Activated B cell treated with CpG ODN at 0.5 μM for 24 hours (primary cell): ENCODE measurements at regions of chr5 and their contacts with region 1.

Region 1: DNA sequence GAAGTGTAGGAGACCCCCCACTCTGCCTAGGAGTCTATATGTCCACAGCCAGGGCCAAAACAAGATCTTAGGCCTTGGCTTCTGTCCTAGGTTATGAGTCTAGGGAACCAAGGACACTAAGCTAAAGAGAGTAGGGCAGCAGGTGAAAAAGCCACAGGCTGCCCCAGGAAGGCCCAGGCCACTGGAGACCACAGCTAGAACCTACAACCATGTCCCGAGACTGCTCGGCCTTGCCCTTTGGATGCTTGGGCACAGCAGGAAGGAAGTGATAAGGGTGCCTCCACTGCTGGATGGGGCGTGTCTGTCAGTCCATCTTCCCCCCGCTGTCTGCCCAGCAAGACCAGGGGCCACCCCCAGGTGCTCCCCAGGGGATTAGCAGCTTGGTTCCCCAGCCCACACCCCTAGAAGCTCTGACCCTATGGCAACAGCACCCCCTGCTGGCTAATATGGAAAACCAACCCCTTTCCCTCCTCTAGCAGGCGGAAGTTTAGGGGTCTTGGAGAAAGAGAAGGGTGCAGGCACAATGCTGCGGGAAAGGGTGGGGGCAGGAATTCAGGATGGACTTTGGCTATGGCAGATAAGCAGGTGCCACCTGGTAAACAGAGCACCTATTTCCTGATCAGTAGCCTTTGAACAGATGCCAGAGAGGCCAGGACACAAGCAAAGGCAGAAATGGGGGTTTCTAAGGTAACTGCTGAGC is 10.5 kb upstream of the IRF1 start:
- DNase-seq: peak; percentile 75
- ATAC-seq: peak; percentile 55
- H3K4me3 Mint-ChIP-seq: no peak overlapping the region
- H3K27ac Mint-ChIP-seq: peak overlapping the region; percentile 88
- H3K4me1 Mint-ChIP-seq: peaks cover 30% of the 10 kb centered on the region
- H3K27me3 Mint-ChIP-seq: no peaks in the 10 kb centered on the region
- CTCF ChIP-seq: peak; percentile 84

Region 2: GRCh38 chr5:131671994-131672655 is 829.0 kb before region 1 on chr5:
- CTCF ChIA-PET with region 1: no interaction called
- POLR2A ChIA-PET with region 1: no interaction called
- intact Hi-C with region 1: no loop called
- DNase-seq: no peak
- ATAC-seq: no peak
- H3K4me3 Mint-ChIP-seq: no peak overlapping the region
- H3K27ac Mint-ChIP-seq: no peak overlapping the region
- H3K4me1 Mint-ChIP-seq: peaks cover 30% of the 10 kb centered on the region
- H3K27me3 Mint-ChIP-seq: no peaks in the 10 kb centered on the region
- CTCF ChIP-seq: no peak

Region 3: GRCh38 chr5:132272311-132273210 is 228.5 kb before region 1 on chr5:
- CTCF ChIA-PET with region 1: interaction called, 13 read pairs
- POLR2A ChIA-PET with region 1: no interaction called
- intact Hi-C with region 1: loop called (anchors 1 kb)
- DNase-seq: peak; percentile 66
- ATAC-seq: peak; percentile 51
- H3K4me3 Mint-ChIP-seq: peak overlapping the region; percentile 4
- H3K27ac Mint-ChIP-seq: no peak overlapping the region
- H3K4me1 Mint-ChIP-seq: peaks cover 12% of the 10 kb centered on the region
- H3K27me3 Mint-ChIP-seq: peaks cover 11% of the 10 kb centered on the region
- CTCF ChIP-seq: peak; percentile 96

Region 4: GRCh38 chr5:132394667-132395259 is 106.3 kb before region 1 on chr5:
- CTCF ChIA-PET with region 1: interaction called, 253 read pairs
- POLR2A ChIA-PET with region 1: interaction called, 27 read pairs
- intact Hi-C with region 1: no loop called
- DNase-seq: no peak
- ATAC-seq: peak; percentile 91
- H3K4me3 Mint-ChIP-seq: peak overlapping the region; percentile 59
- H3K27ac Mint-ChIP-seq: peak overlapping the region; percentile 65
- H3K4me1 Mint-ChIP-seq: peaks cover 29% of the 10 kb centered on the region
- H3K27me3 Mint-ChIP-seq: no peaks in the 10 kb centered on the region
- CTCF ChIP-seq: no peak

Region 5: DNA sequence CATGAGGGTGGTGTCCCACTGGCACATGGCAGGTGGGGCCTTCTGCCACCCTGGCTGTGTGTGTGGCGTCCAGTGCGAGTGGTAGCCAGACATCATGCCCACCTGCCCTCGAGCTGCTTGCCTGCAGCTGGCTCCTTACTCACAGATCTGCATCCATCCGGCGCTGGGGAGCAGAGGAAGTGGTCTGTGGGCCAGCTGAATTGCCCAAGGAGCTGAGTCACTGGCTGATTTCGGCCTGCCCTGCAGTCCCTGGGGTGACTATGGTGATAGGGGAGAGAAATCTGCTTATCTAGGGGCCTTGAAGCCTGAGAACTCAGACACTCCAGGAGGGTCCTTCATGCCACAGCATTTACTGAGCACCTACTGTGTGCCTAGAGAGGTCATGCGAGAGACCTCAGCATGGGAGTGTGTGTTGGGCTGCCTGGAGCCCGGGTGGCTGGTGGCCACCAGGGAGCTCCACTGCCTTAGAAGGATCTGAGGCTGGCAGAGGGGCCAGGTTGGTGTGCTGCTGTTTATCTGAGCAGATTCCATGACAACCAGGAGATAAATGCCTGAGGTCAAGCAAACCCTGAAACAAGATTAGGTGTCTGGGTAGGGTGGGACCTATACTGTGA is 74.4 kb before region 1 on chr5:
- CTCF ChIA-PET with region 1: interaction called, 43 read pairs
- POLR2A ChIA-PET with region 1: interaction called, 461 read pairs
- intact Hi-C with region 1: loop called (anchors 1 kb)
- DNase-seq: peak; percentile 60
- ATAC-seq: peak; percentile 44
- H3K4me3 Mint-ChIP-seq: peak overlapping the region; percentile 62
- H3K27ac Mint-ChIP-seq: peak overlapping the region; percentile 91
- H3K4me1 Mint-ChIP-seq: peaks cover 100% of the 10 kb centered on the region
- H3K27me3 Mint-ChIP-seq: no peaks in the 10 kb centered on the region
- CTCF ChIP-seq: no peak

Region 6: DNA sequence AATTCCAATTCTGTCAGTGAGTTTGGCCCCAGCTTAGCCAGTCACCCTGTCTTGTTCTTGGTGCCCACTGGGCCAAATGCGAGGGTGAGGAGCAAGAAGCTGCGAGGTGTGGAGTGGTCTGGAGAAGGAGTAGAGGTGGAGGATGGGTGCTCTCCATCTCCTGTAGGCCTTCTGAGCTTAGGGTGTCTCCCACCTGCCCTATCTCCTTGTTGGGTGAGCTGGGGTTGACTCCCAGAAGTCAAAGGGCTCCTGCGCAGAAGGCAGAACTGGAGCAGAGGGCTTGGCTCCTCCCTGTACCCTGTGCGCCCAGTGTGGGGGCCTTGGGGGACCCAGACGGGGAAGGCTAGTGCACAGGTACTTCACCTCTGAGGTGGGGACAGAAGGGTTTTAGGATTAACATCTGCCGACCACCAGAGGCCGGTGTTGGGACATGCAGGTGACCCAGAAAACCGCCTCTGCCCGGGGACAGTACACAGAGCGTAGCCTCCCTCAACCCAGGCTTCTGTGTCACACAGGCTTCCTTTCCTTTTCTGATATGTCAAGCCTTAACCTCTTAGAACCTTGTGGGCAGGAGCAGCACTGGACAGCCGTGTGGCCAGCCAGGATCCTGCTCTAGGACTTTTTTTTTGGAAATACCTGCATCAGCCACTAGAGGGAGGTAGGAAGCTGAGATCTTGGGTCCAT is 25.4 kb after region 1 on chr5:
- CTCF ChIA-PET with region 1: interaction called, 10 read pairs
- POLR2A ChIA-PET with region 1: interaction called, 9 read pairs
- intact Hi-C with region 1: loop called (anchors 1 kb)
- DNase-seq: peak; percentile 26
- ATAC-seq: peak; percentile 51
- H3K4me3 Mint-ChIP-seq: peak overlapping the region; percentile 25
- H3K27ac Mint-ChIP-seq: peak overlapping the region; percentile 27
- H3K4me1 Mint-ChIP-seq: peaks cover 53% of the 10 kb centered on the region
- H3K27me3 Mint-ChIP-seq: no peaks in the 10 kb centered on the region
- CTCF ChIP-seq: peak; percentile 69

Region 7: DNA sequence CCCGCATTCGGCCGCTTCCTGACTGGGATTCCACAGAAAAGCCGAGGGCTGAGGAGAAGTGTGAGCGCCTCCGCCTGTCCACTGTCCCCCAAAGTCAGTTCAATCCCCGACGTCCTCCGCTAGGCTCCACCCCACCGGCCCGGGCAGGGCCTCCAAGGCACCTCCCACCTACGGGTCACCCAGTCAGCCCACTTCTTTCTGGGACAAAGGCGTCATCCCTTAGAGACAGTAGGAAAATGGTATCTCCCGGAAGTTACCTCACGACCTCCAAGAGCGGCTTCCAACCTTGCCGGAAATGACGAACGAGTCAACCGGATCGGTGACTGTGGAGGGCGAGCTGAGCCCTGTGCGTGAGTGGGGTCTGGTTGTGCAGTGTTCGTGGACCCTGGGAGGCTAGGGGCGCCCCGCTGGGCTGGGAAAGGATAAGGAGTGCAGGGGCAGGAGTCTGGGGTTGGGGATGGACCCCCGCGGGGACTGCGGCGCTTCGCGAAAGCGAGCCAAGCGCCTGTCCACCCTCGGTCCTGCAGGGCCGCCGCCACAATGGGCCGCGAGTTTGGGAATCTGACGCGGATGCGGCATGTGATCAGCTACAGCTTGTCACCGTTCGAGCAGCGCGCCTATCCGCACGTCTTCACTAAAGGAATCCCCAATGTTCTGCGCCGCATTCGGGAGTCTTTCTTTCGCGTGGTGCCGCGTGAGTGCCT is 365.4 kb after region 1 on chr5 and contains the starts of genes GDF9 and UQCRQ:
- CTCF ChIA-PET with region 1: interaction called, 5 read pairs
- POLR2A ChIA-PET with region 1: interaction called, 3 read pairs
- intact Hi-C with region 1: loop called (anchors 5 kb)
- DNase-seq: peak; percentile 77
- ATAC-seq: peak; percentile 98
- H3K4me3 Mint-ChIP-seq: peak within 1 kb of the TSS; percentile 99
- H3K27ac Mint-ChIP-seq: peak within 1 kb of the TSS; percentile 98
- H3K4me1 Mint-ChIP-seq: peaks cover 25% of the 10 kb centered on the region
- H3K27me3 Mint-ChIP-seq: no peaks in the 10 kb centered on the region
- CTCF ChIP-seq: no peak
- total RNA-seq, gene GDF9: 0.29 and 0.39 TPM in 2 replicates
- total RNA-seq, gene UQCRQ: 197 and 218 TPM in 2 replicates